Esophagus muscularis mucosa (tissue), 4 donors: ENCODE measurements at regions of chr2 and their contacts with region 1.

Region 1: DNA sequence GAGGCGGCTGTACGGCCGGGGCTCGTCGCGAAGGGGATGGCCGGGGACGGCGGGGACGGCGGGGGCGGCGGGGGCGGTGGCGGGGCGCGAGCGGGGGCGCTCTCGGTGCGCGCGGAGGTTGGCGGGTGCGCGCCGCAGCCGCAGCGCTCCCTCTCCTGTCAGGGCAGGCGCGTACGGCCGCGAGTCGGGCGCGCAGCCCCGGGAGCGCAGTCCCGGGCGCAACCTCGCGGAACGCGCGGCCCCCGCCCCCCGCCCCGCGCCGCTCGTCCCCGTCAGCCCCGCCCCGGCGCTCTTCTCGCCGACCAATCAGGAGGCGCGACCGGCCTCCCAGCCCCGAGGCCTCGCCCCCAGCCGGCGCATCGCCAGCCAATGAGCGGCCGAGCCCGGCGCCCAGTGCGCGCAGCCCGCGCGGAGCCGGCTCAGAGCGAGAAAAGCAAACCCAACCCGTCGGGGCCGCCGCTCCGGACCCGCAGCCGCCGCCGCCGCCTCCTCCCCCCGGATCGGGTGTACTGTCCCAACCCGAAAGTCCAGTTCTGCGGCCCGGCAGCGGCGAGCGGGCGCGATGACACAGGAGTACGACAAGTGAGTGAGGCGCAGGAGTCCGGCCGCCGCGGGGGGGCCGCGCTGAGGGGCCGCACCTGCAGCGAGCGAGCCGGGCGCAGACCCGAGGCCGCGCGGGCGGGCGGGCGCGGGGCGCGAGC is at the start of gene GRHL1:
- DNase-seq: peak; percentile 96
- H3K4me3 ChIP-seq: peak within 1 kb of the TSS; percentile 69 to 85 (median 80)
- H3K27ac ChIP-seq: peak within 1 kb of the TSS; percentile 68 to 80 (median 78)
- H3K4me1 ChIP-seq: peaks cover 0 to 19% (median 15%) of the 10 kb centered on the region in 4 donors
- H3K27me3 ChIP-seq: peaks cover 0 to 4% (median 0%) of the 10 kb centered on the region in 4 donors
- CTCF ChIP-seq: peak in 1 of 3 experiments; percentile 7
- EP300 ChIP-seq: no peak
- POLR2A ChIP-seq: no peak
- total RNA-seq, gene GRHL1: 0.86 to 5.1 (median 2.6) TPM

Region 2: GRCh38 chr2:9843229-9844035 is 108.0 kb before region 1 on chr2 and contains the start of gene TAF1B:
- intact Hi-C with region 1: loop called (anchors 2 kb)
- DNase-seq: peak; percentile 95
- H3K4me3 ChIP-seq: peak within 1 kb of the TSS; percentile 77 to 96 (median 80)
- H3K27ac ChIP-seq: peak within 1 kb of the TSS; percentile 85 to 90 (median 88)
- H3K4me1 ChIP-seq: peaks cover 9 to 25% (median 17%) of the 10 kb centered on the region in 4 donors
- H3K27me3 ChIP-seq: no peaks in the 10 kb centered on the region
- CTCF ChIP-seq: peak in 1 of 3 experiments; percentile 34
- EP300 ChIP-seq: no peak
- POLR2A ChIP-seq: peak; percentile 69
- total RNA-seq, gene TAF1B: 7.1 to 10.1 (median 8.0) TPM